CD4-positive, alpha-beta memory T cell (primary cell): ENCODE measurements at regions of chr6 and their contacts with region 1.

Region 1: DNA sequence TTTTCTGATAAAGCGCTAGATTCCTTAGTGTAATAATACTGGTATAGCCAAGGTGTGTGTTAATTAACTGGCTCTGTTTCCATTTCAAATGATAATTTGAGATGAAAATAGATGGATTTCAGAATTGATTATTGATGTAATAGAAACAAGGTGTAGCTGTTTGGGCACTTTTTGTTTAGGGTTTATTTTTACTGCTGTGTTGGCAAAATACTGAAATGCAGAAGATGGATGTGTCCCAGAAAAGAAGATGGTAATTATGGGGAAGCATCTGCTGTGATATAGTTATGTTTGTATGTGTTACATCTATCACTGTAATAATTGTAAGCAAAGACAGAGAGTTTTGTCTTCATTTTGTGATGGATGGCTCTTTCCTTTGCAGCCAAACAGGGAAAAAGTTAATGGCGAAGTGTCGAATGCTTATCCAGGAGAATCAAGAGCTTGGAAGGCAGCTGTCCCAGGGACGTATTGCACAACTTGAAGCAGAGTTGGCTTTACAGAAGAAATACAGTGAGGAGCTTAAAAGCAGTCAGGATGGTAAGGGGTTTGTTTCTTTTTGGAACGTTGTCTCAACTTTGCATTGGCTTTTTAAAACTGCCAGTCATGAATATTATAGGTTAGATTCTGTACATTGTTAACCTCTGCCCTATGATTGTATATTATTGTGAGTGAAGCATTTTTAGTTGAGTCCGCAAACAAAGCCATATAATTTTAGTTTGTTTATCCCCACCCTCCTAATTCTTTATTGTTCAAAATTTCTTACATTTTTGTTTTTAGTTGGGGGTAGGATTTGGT is 8.6 kb upstream of the ACAT2 start:
- DNase-seq: no peak
- H3K4me3 ChIP-seq: no peak overlapping the region
- H3K4me3 Mint-ChIP-seq: no peak overlapping the region
- H3K27ac ChIP-seq: no peak overlapping the region
- H3K27ac Mint-ChIP-seq: peak overlapping the region in 5 of 7 donors; percentile 4 to 50 (median 30)
- H3K4me1 ChIP-seq: no peaks in the 10 kb centered on the region
- H3K4me1 Mint-ChIP-seq: peaks cover 0 to 11% (median 4%) of the 10 kb centered on the region in 4 donors
- H3K27me3 ChIP-seq: no peaks in the 10 kb centered on the region
- H3K27me3 Mint-ChIP-seq: no peaks in the 10 kb centered on the region

Region 2: DNA sequence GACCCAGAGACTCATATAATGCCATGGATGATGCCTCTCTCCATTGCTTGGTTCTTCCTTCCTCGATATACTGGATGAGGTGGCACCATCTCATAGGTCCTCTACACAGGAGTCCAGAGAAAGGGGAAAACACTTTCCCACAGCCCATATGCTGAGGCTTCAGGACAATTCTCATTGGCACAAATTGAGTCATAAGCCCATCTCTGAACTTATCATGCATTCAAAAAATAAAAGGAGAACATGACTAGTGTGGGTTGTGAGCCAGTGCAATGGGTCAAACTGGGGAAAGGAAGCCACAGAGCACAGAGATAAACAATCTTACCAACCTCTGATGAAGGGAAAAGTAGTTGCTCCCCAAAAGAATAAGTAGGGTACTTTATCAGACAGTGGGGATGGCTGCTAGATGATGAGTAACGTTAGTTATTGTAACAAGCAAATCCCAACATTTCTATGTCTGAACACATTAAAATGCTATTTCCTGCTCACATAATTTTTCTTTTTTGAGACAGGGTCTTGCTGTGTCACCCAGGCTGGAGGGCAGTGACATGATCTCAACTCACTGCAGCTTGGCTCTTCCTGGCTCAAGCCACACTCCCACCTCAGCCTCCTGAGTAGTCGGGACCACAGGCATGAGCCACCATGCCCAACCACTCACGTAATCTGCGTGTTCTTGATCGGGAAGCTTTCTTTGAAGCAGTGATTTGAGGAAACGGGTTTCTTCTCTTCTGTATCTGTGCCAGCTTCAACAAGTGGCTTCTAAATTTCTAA is 87.2 kb before region 1 on chr6:
- CTCF ChIA-PET with region 1: no interaction called
- POLR2A ChIA-PET with region 1: no interaction called
- intact Hi-C with region 1: no loop called
- DNase-seq: no peak
- H3K4me3 ChIP-seq: no peak overlapping the region
- H3K4me3 Mint-ChIP-seq: no peak overlapping the region
- H3K27ac ChIP-seq: no peak overlapping the region
- H3K27ac Mint-ChIP-seq: no peak overlapping the region
- H3K4me1 ChIP-seq: no peaks in the 10 kb centered on the region
- H3K4me1 Mint-ChIP-seq: peaks cover 0 to 3% (median 0%) of the 10 kb centered on the region in 4 donors
- H3K27me3 ChIP-seq: no peaks in the 10 kb centered on the region
- H3K27me3 Mint-ChIP-seq: no peaks in the 10 kb centered on the region

Region 3: DNA sequence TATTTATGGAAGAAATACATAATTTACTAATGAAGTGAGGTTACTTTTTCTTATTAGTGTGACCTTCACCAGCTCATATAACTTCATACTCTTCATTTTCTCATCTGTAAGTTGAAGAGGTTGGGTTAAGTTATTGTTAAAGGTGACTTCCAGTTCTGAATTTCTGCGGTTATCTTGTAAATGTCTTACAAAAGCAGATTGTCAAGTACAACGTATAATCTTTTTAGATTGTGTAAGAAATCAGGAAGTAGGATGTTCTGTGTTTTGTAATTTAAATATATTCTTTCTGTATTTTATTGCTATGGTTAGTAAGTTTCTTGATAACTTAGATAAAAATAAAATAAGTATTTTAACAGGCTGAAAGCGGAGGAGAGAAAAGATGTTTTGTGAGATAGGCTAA is 13.9 kb before region 1 on chr6:
- CTCF ChIA-PET with region 1: interaction called, 3 read pairs
- POLR2A ChIA-PET with region 1: interaction called, 4 read pairs
- intact Hi-C with region 1: loop called (anchors 2 kb)
- DNase-seq: no peak
- H3K4me3 ChIP-seq: no peak overlapping the region
- H3K4me3 Mint-ChIP-seq: no peak overlapping the region
- H3K27ac ChIP-seq: no peak overlapping the region
- H3K27ac Mint-ChIP-seq: peak overlapping the region in 1 of 7 donors; percentile 24
- H3K4me1 ChIP-seq: peaks cover 45% of the 10 kb centered on the region
- H3K4me1 Mint-ChIP-seq: peaks cover 21 to 39% (median 32%) of the 10 kb centered on the region in 4 donors
- H3K27me3 ChIP-seq: no peaks in the 10 kb centered on the region
- H3K27me3 Mint-ChIP-seq: no peaks in the 10 kb centered on the region

Region 4: GRCh38 chr6:159929819-159930218 is 176.5 kb after region 1 on chr6:
- CTCF ChIA-PET with region 1: no interaction called
- POLR2A ChIA-PET with region 1: no interaction called
- intact Hi-C with region 1: no loop called
- DNase-seq: peak; percentile 61 to 92 (median 73)
- H3K4me3 ChIP-seq: no peak overlapping the region
- H3K4me3 Mint-ChIP-seq: peak overlapping the region in 7 of 8 donors; percentile 10 to 69 (median 46)
- H3K27ac ChIP-seq: peak overlapping the region; percentile 53
- H3K27ac Mint-ChIP-seq: peak overlapping the region; percentile 48 to 94 (median 85)
- H3K4me1 ChIP-seq: peaks cover 32% of the 10 kb centered on the region
- H3K4me1 Mint-ChIP-seq: peaks cover 21 to 30% (median 23%) of the 10 kb centered on the region in 4 donors
- H3K27me3 ChIP-seq: no peaks in the 10 kb centered on the region
- H3K27me3 Mint-ChIP-seq: peaks cover 1% of the 10 kb centered on the region in 2 donors